ENCODE measurements at regions of chr7 and their contacts with region 1.

Region 1: DNA sequence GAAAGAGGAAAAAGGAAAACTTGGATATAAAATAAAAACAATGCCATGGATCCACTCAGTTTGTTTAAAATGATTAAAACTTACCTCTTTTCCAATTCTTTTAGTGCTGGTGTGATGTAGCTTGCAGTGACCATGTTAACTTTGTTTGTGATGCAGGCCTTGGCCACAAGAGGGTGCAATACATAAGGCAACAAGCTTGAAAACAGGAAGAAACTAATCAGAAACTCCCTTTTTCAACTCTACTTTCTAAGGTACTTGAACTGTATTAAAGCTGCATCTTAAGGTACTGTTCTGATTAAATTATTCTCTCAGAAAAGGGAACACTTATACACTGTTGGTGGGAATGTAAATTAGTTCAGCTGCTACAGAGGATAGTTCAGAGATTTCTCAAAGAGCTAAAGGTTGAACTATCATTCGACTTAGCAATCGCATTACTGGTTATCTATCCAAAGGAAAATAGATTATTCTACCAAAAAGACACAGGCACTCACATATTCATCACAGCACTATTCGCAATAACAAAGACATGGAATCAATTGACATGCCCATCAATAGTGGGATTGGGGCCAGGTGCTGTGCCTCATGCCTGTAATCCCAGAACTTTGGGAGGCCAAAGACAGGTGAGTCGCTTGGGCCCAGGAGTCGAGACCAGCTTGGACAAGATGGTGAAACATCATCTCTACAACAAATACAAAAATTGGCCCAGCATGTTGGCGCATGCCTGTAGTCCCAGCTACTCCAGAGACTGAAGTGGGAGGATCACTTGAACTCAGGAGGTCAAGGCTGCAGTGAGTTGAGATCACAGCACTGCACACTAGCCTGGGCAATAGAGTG is 50.9 kb downstream of the AASS start:
- DNase-seq: peak; percentile 75
- H3K4me3 Mint-ChIP-seq: no peak overlapping the region
- H3K27ac Mint-ChIP-seq: no peak overlapping the region
- H3K4me1 Mint-ChIP-seq: no peaks in the 10 kb centered on the region
- H3K27me3 Mint-ChIP-seq: no peaks in the 10 kb centered on the region
- CTCF ChIP-seq: peak; percentile 73

Region 2: GRCh38 chr7:122082670-122083069 is 10.5 kb before region 1 on chr7:
- CTCF ChIA-PET with region 1: interaction called, 37 read pairs
- POLR2A ChIA-PET with region 1: no interaction called
- intact Hi-C with region 1: no loop called
- DNase-seq: no peak
- H3K4me3 Mint-ChIP-seq: no peak overlapping the region
- H3K27ac Mint-ChIP-seq: no peak overlapping the region
- H3K4me1 Mint-ChIP-seq: no peaks in the 10 kb centered on the region
- H3K27me3 Mint-ChIP-seq: no peaks in the 10 kb centered on the region
- CTCF ChIP-seq: no peak

Region 3: DNA sequence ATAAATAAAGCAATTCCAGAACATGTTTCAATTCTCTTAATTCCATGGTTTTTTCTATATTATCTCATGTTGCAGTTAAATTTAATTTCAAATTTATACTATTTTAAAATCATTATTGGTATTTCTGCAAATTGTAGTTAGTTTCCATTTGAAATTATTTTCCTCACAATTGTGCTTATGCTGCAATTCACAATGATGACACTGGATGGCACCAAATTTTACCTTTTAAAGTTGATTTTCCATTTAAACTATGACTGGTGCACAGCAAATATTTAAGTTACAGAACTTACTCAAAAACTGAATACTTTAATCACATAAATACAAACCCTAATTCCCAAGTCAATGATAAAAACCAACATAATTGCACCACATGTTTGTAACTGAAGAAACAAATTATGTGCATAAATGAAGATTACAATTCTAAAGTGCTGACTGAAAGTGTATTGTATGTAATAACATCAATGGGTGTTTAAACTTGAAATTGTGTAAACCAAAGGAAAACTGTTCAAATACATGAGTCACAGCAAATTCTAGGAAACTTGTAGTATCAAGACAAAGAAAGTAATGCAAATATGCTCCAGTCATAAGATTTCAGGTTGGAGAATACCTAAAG is 126.2 kb after region 1 on chr7:
- CTCF ChIA-PET with region 1: interaction called, 19 read pairs
- POLR2A ChIA-PET with region 1: no interaction called
- intact Hi-C with region 1: loop called (anchors 5 kb)
- DNase-seq: peak; percentile 41
- H3K4me3 Mint-ChIP-seq: no peak overlapping the region
- H3K27ac Mint-ChIP-seq: no peak overlapping the region
- H3K4me1 Mint-ChIP-seq: peaks cover 6% of the 10 kb centered on the region
- H3K27me3 Mint-ChIP-seq: peaks cover 18% of the 10 kb centered on the region
- CTCF ChIP-seq: peak; percentile 54

Region 4: DNA sequence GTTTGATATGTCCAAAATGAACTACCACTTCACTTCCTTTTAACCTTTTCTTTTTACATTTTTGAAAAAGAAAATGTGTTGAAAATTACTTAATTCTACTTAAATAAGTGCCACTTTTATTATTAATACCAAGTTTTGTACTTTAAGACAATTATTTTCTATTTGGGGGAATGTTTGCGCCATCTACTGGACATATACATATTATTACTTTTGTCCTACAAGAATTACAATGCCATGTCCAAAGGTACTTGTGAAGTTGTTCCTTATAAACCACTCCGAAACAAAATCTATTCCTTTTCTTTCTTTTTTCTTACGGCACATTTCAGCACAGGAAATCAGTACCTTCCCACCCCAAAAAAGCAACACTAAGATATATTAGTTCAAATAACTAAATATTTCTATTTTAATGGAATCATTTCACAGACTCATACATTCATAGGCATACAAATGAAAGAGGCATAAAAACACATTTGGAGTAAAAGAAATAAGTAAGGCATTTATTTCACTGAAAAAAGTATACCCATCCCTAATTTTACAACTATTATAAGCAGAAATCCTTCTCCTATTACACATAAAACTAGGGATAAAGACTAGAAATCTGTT is 435.8 kb after region 1 on chr7:
- CTCF ChIA-PET with region 1: interaction called, 36 read pairs
- POLR2A ChIA-PET with region 1: interaction called, 3 read pairs
- intact Hi-C with region 1: loop called (anchors 1 kb)
- DNase-seq: peak; percentile 46
- H3K4me3 Mint-ChIP-seq: no peak overlapping the region
- H3K27ac Mint-ChIP-seq: no peak overlapping the region
- H3K4me1 Mint-ChIP-seq: no peaks in the 10 kb centered on the region
- H3K27me3 Mint-ChIP-seq: no peaks in the 10 kb centered on the region
- CTCF ChIP-seq: peak; percentile 42

Measured in MCF 10A (cell line).